ENCODE measurements at regions of chr15 and their contacts with region 1.

Region 1: GRCh38 chr15:100873029-100873677 is 6.5 kb upstream of the ALDH1A3 start:
- DNase-seq: peak; percentile 71
- ATAC-seq: peak; percentile 47
- H3K4me3 Mint-ChIP-seq: no peak overlapping the region
- H3K27ac Mint-ChIP-seq: no peak overlapping the region
- H3K4me1 Mint-ChIP-seq: peaks cover 17% of the 10 kb centered on the region
- H3K27me3 Mint-ChIP-seq: peaks cover 38% of the 10 kb centered on the region
- CTCF ChIP-seq: peak; percentile 83

Region 2: GRCh38 chr15:100635406-100636071 is 237.6 kb before region 1 on chr15:
- CTCF ChIA-PET with region 1: interaction called, 11 read pairs
- POLR2A ChIA-PET with region 1: no interaction called
- DNase-seq: peak; percentile 43
- ATAC-seq: peak; percentile 75
- H3K4me3 Mint-ChIP-seq: no peak overlapping the region
- H3K27ac Mint-ChIP-seq: peak overlapping the region; percentile 72
- H3K4me1 Mint-ChIP-seq: peaks cover 48% of the 10 kb centered on the region
- H3K27me3 Mint-ChIP-seq: no peaks in the 10 kb centered on the region
- CTCF ChIP-seq: no peak

Region 3: DNA sequence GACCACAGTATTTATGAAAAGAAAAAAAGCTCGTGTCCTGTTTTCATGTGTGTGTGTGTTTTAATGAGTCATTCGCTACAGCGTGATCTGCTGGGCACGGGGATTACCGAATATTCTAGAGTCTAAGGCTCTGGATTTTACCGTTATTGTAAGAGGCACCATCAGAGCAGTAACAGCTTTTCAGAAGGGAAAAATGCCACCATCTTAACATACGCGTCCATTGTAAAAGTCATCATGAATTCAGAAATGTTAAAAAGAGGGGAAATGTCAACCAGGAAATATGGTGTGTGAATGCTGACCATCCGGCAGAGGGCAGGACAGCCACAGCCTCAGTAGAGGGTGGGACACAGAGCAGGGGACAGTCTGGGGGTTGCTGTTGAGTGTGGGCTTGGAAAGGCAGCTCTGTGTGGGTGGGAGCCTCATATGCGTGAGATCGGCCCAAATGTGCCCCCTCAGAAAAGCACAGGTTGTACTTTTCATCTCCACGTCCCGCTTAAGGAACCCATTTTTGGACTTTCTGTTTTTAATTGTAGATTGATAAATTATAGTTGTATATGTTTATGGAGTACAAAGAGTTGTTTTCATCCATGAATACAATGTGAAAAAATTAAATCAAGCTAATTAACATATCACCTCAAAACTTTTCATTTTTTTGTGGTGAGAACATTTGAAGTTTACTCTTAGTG is 201.2 kb before region 1 on chr15:
- CTCF ChIA-PET with region 1: interaction called, 20 read pairs
- POLR2A ChIA-PET with region 1: no interaction called
- DNase-seq: peak; percentile 36
- ATAC-seq: peak; percentile 94
- H3K4me3 Mint-ChIP-seq: no peak overlapping the region
- H3K27ac Mint-ChIP-seq: no peak overlapping the region
- H3K4me1 Mint-ChIP-seq: no peaks in the 10 kb centered on the region; the same call in 1 of the 2 replicates
- H3K27me3 Mint-ChIP-seq: peaks cover 5% of the 10 kb centered on the region; the same call in 1 of the 2 replicates
- CTCF ChIP-seq: peak; percentile 40; the same call in 1 of the 2 replicates

Region 4: GRCh38 chr15:100859970-100860828 is 13.0 kb before region 1 on chr15:
- CTCF ChIA-PET with region 1: interaction called, 11 read pairs
- POLR2A ChIA-PET with region 1: no interaction called
- DNase-seq: no peak
- ATAC-seq: no peak
- H3K4me3 Mint-ChIP-seq: no peak overlapping the region
- H3K27ac Mint-ChIP-seq: no peak overlapping the region
- H3K4me1 Mint-ChIP-seq: 0 out of 2 replicates have a peak, but pooled peaks cover 5% of the 10 kb centered on the region
- H3K27me3 Mint-ChIP-seq: no peaks in the 10 kb centered on the region; the same call in none of the 2 replicates
- CTCF ChIP-seq: no peak

Region 5: GRCh38 chr15:100918034-100918689 is 45.0 kb after region 1 on chr15:
- CTCF ChIA-PET with region 1: interaction called, 11 read pairs
- POLR2A ChIA-PET with region 1: no interaction called
- DNase-seq: peak; percentile 88
- ATAC-seq: peak; percentile 88
- H3K4me3 Mint-ChIP-seq: peak overlapping the region; percentile 66
- H3K27ac Mint-ChIP-seq: no peak overlapping the region
- H3K4me1 Mint-ChIP-seq: peaks cover 18% of the 10 kb centered on the region
- H3K27me3 Mint-ChIP-seq: peaks cover 58% of the 10 kb centered on the region
- CTCF ChIP-seq: peak; percentile 85